ENCODE measurements at regions of chr3 and their contacts with region 1.

Region 1: DNA sequence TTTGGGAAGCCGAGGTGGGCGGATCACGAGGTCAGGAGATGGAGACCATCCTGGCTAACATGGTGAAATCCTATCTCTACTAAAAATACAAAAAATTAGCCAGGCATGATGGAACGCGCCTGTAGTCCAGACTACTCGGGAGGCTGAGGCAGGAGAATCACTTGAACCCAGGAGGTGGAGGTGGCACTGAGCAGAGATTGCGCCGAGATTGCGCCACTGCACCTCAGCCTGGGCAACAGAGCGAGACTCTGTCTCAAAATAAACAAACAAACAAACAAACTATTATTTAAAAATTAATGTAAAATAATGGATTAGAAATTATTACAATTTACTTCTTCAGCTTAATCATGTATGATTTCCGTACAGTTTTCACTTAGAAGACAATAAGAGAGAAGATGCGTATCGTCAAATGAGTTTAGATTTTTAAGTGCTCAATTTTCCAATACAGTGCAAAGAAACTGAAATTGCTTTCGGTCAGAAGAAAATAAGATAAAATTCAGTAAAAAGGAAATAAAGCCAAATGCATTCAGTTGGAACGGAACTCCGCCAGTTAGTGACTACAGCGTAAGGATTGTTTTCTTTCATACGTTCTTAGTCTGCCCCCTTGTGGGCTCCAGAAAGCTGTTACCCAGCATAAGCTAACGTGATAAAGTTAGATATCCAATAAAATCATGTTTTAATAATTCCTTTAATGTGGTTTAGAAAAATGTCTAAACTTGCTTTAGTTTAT is 24.8 kb downstream of the AADAC start:
- DNase-seq: peak; percentile 2
- ATAC-seq: peak; percentile 87
- H3K4me3 ChIP-seq: no peak overlapping the region
- H3K27ac ChIP-seq: no peak overlapping the region
- H3K4me1 ChIP-seq: no peaks in the 10 kb centered on the region
- H3K27me3 ChIP-seq: no peaks in the 10 kb centered on the region
- CTCF ChIP-seq: peak; percentile 66 to 75 (median 73); a peak in 5 of 6 replicates
- EP300 ChIP-seq: no peak
- POLR2A ChIP-seq: no peak
- RAD21 ChIP-seq: peak; percentile 87

Region 2: GRCh38 chr3:151290673-151291072 is 548.1 kb before region 1 on chr3:
- CTCF ChIA-PET with region 1: interaction called, 4 read pairs
- POLR2A ChIA-PET with region 1: no interaction called
- RAD21 ChIA-PET with region 1: interaction called, 3 read pairs
- SMC1A ChIA-PET with region 1: interaction called, 3 read pairs
- in situ Hi-C with region 1: no loop called
- intact Hi-C with region 1: loop called (anchors 5 kb)
- DNase-seq: no peak
- ATAC-seq: no peak
- H3K4me3 ChIP-seq: no peak overlapping the region
- H3K27ac ChIP-seq: no peak overlapping the region
- H3K4me1 ChIP-seq: no peaks in the 10 kb centered on the region
- H3K27me3 ChIP-seq: no peaks in the 10 kb centered on the region; a peak in 1 of 4 replicates
- CTCF ChIP-seq: peak in 2 of 3 experiments; percentile 5 to 41; a peak in 3 of 6 replicates
- EP300 ChIP-seq: no peak
- POLR2A ChIP-seq: no peak
- RAD21 ChIP-seq: peak; percentile 83

Region 3: DNA sequence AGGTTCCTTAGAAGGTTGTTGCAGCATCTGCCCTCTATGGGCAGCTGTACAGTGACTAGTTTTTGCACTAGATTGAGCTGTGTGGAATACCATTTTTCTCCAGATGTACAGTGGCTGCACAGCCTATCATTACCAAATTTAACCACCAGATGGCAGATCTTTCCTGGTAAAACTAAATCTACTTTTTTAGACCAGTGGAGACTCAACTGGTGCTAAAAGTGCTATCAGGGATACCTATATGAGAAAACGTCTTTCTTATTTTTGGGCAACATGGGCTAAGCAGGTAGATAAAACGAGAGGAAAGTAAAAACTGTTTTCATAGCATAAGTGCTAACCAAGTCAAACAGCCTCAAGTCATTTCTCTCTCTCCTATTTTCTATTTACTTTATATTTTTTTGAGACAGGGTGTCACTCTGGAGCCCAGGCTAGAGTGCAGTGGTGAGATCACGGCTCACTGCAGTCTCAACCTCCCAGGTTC is 399.1 kb before region 1 on chr3:
- CTCF ChIA-PET with region 1: interaction called, 47 read pairs
- POLR2A ChIA-PET with region 1: no interaction called
- RAD21 ChIA-PET with region 1: interaction called, 16 read pairs
- SMC1A ChIA-PET with region 1: interaction called, 38 read pairs
- in situ Hi-C with region 1: loop called (anchors 10 kb)
- intact Hi-C with region 1: loop called (anchors 1 kb)
- DNase-seq: no peak
- ATAC-seq: peak; percentile 92
- H3K4me3 ChIP-seq: no peak overlapping the region
- H3K27ac ChIP-seq: no peak overlapping the region
- H3K4me1 ChIP-seq: no peaks in the 10 kb centered on the region
- H3K27me3 ChIP-seq: no peaks in the 10 kb centered on the region
- CTCF ChIP-seq: peak; percentile 63 to 70 (median 70)
- EP300 ChIP-seq: no peak
- POLR2A ChIP-seq: no peak
- RAD21 ChIP-seq: peak; percentile 68

Region 4: GRCh38 chr3:151827816-151828215 is 10.9 kb before region 1 on chr3:
- CTCF ChIA-PET with region 1: no interaction called
- POLR2A ChIA-PET with region 1: no interaction called
- RAD21 ChIA-PET with region 1: no interaction called
- SMC1A ChIA-PET with region 1: no interaction called
- in situ Hi-C with region 1: no loop called
- intact Hi-C with region 1: no loop called
- DNase-seq: no peak
- ATAC-seq: no peak
- H3K4me3 ChIP-seq: no peak overlapping the region
- H3K27ac ChIP-seq: no peak overlapping the region
- H3K4me1 ChIP-seq: no peaks in the 10 kb centered on the region
- H3K27me3 ChIP-seq: no peaks in the 10 kb centered on the region
- CTCF ChIP-seq: no peak
- EP300 ChIP-seq: no peak
- POLR2A ChIP-seq: no peak
- RAD21 ChIP-seq: no peak

Measured in GM12878 (cell line).